ENCODE measurements at regions of chr17 and their contacts with region 1.

Region 1: DNA sequence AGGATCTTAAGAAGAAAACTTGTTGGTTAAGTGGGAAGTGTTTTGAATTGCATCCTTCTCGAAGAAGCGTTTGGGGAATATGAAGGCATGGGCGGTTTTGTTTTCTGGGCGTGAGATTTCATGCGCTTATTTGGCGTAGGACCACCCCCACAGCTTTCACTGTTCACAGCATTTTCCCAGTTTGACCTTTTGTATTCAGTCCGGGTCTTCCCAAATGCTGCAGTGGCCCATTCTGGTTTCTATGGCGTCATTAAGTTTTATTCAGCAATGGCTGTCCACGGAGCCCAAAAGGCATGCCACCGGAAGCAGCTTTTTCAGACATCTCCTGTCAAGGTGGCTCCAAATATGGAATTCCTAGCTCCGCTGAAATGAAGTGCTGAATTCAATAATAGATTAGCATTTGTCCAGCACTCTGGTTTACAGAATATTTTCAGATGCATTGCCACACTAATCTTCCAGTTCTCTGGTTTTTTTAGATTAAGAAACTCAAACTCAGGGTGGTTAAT is 90.6 kb upstream of the FBXO47 start:
- DNase-seq: no peak
- ATAC-seq: no peak
- H3K4me3 Mint-ChIP-seq: peak overlapping the region; percentile 67
- H3K27ac Mint-ChIP-seq: no peak overlapping the region
- H3K4me1 Mint-ChIP-seq: peaks cover 15% of the 10 kb centered on the region
- H3K27me3 Mint-ChIP-seq: no peaks in the 10 kb centered on the region

Region 2: DNA sequence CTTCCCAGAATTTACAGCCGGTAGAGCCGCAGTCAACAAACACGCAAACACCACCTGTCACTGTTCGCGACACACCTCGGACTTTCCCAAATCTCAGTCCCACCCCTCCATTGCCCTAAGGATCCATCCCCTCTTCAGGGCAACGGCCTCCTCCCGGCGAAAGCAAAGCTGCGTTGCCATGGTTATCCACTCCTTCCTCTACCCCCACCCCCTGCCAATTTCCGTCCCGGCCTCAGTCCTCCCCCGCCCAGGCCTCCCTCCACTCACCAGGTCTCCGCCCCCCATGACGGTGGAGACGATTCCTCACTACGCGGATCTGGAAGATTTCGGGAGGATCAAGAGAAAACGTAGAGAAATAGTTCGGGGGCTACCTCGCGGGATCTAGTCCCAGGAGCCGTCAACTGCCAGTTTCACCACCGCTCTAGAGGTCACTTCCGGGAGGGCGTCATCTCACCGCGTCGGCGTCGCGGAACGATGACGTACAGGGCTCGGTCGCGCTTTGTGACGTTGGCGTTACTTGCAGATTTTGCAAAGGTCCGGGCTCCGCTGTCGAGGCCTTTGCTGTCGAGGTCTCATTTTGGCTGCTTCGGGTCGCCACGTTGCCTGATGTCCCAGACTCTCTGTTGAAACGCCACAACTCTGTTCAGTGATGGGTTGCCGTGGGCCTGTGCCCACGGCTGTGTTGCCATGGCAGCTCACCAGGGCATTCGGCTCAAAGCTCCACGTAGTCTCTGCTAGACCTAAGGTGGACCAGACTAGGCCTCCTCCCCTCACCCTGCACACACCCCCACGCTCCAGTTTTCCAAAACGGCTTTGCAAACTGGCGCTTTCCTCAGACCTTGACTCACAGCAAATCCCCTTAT is 232.6 kb before region 1 on chr17 and contains the start of gene CWC25:
- CTCF ChIA-PET with region 1: no interaction called
- POLR2A ChIA-PET with region 1: no interaction called
- intact Hi-C with region 1: loop called in 1 of 2 experiments (anchors 1 kb)
- DNase-seq: peak; percentile 95
- ATAC-seq: peak; percentile 82
- H3K4me3 Mint-ChIP-seq: peak within 1 kb of the TSS; percentile 99
- H3K27ac Mint-ChIP-seq: peak within 1 kb of the TSS; percentile 99
- H3K4me1 Mint-ChIP-seq: peaks cover 27% of the 10 kb centered on the region
- H3K27me3 Mint-ChIP-seq: no peaks in the 10 kb centered on the region
- total RNA-seq, gene CWC25: 23.3 to 24.0 TPM

Region 3: DNA sequence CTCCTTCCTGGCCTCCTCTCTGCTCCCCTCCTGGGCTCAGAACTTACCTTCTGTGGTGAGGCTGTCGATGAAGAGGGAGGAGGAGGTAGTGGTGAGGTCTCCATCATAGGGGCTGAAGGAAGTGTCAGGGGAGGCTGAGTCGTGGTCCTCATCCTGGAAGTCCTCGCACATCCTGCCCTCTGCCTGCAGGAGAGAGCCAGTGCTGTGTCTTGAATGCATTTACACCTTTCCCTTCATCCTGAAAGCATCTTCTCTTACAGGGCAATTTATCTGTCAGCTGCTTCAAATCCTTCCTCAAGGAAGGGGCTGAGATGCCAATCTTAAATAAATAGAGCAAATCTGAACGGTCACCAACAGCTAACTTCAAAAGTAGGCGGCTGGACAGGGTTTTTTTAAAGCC is 20.1 kb after region 1 on chr17:
- CTCF ChIA-PET with region 1: no interaction called
- POLR2A ChIA-PET with region 1: no interaction called
- intact Hi-C with region 1: no loop called
- DNase-seq: no peak
- ATAC-seq: no peak
- H3K4me3 Mint-ChIP-seq: no peak overlapping the region
- H3K27ac Mint-ChIP-seq: no peak overlapping the region
- H3K4me1 Mint-ChIP-seq: peaks cover 2% of the 10 kb centered on the region
- H3K27me3 Mint-ChIP-seq: no peaks in the 10 kb centered on the region

Region 4: GRCh38 chr17:39199820-39200069 is 142.0 kb after region 1 on chr17:
- CTCF ChIA-PET with region 1: no interaction called
- POLR2A ChIA-PET with region 1: no interaction called
- intact Hi-C with region 1: loop called in 1 of 2 experiments (anchors 2 kb)
- DNase-seq: peak; percentile 95
- ATAC-seq: peak; percentile 69
- H3K4me3 Mint-ChIP-seq: peak overlapping the region; percentile 98
- H3K27ac Mint-ChIP-seq: peak overlapping the region; percentile 100
- H3K4me1 Mint-ChIP-seq: peaks cover 51% of the 10 kb centered on the region
- H3K27me3 Mint-ChIP-seq: no peaks in the 10 kb centered on the region

Measured in activated CD4-positive, alpha-beta T cell treated with anti-CD3 and anti-CD28 coated beads for 36 hours (primary cell).